ENCODE measurements at regions of chr14 and their contacts with region 1.

Region 1: DNA sequence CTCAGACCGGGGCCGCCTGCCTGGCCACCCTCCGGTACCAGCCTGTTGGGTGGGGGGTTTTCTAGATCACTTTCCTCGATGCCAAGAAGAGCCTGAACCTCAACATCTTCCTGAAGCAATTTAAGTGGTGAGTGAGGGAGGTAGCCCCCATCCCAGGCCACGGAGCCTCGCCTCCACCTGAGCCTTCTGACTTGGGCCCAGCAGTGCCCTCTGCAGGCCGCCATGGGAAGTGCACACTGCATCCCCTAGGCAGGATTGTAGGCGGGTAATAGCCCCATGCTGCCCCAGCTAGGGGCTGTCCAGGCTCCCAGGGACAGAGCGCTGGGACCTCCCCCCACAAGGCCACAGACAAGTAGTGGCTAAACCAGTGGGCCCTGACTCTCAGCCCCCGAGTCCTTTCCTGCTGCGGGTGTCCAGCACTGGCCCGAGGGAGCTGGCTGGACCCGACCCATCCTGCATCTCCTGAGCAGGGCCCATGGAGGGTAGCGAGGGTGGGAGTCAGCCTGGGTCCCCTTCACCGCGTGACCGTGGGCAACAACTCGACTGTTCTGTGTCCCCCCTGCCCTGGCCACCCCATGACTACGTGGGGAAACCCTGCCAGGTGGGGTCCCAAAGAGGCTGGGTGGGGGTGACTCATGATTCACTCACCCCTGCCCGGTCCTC is 15.3 kb upstream of the ADSS1 start:
- DNase-seq: peak; percentile 80
- H3K4me3 Mint-ChIP-seq: no peak overlapping the region
- H3K27ac Mint-ChIP-seq: no peak overlapping the region
- H3K4me1 Mint-ChIP-seq: peaks cover 1% of the 10 kb centered on the region
- H3K27me3 Mint-ChIP-seq: no peaks in the 10 kb centered on the region

Region 2: DNA sequence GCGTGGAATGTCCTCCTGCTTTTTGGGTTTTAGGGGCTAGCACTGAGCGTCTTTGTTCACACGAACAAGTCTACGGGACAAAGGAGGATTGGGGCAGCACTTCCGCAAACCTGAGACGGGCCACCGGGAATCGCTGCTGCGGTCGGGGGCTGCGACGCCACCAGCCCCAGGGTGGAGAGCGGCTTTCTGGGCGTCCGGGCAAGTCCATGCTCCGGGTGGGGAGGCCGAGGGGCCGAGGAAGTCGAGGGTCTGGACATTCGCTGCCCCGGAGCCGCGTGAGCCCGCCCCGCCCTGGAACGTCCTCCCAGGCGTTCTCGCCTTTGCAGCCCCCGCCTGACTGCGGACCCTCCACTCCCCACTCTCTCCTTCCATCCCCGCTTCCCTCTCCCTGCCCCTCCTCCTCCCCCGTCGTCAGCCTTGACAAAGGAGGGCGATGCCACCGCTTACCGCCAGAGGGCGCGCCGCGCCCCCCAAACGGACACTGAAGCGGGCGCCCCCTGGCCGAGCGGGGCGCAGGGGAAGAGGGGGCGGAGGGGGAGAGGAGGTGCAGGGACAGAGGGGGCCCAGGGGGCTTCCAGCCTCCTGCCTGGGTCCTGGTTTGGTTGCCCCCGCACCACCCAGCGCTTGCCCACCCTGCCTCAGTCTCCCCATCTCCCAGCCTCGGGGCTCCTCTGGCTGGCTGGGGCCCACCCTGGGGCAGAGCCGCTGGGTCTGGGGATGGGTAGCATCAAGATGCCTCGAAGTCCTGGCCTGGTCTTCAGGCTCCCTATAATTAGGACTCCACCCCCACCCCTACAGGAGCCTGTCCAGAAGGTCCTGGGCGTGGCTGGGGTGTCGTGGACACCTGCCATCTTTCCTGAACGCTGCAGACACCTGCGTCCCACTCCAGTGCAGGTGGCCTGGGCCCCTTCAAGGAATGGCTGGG is 58.4 kb before region 1 on chr14:
- CTCF ChIA-PET with region 1: interaction called, 6 read pairs
- POLR2A ChIA-PET with region 1: no interaction called
- intact Hi-C with region 1: loop called (anchors 1 kb)
- DNase-seq: peak; percentile 73
- H3K4me3 Mint-ChIP-seq: no peak overlapping the region
- H3K27ac Mint-ChIP-seq: no peak overlapping the region
- H3K4me1 Mint-ChIP-seq: no peaks in the 10 kb centered on the region
- H3K27me3 Mint-ChIP-seq: peaks cover 2% of the 10 kb centered on the region

Region 3: DNA sequence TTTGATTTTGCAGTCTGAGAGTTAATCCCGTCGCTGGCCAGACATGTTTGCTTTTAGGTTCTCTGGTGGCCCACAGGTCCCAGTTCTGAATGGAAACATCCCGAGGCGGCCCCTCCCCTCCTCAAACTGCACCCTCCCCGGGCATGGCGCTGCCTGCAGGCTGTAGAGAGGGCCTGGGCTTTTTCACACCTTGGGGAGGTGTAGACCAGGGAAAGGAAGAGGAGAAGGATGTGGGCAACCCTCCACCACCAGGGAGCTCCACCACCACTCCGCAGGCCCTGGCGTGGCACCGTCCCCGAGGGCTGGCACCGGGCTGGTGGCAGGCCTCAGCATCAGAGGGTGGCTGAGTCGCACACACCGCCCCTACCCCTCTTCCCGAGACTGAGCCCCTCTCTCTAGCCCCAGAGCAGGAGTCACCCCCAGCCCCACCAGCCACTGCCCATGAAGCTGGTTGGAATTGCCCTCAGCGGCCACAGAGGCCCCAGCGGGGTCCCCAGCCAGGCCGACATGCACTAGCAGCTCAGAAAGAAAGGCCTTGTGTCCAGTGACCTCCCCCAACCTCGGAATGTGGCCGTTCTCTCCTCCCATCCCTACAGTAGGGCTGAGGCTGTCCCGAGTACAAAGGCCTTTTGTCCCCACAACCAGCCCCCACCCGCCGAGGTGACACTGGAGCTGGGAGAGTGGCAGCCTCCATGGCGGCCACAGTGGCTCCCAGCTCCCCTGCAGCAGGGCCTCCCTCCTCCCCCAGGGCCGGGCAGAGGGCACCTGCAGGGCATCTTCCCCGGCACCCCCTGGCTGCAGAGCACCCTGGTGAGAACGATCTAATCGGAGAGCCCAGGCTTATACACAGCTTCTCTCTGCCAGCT is 42.8 kb before region 1 on chr14:
- CTCF ChIA-PET with region 1: interaction called, 15 read pairs
- POLR2A ChIA-PET with region 1: no interaction called
- intact Hi-C with region 1: loop called (anchors 1 kb)
- DNase-seq: peak; percentile 67
- H3K4me3 Mint-ChIP-seq: no peak overlapping the region
- H3K27ac Mint-ChIP-seq: no peak overlapping the region
- H3K4me1 Mint-ChIP-seq: peaks cover 22% of the 10 kb centered on the region
- H3K27me3 Mint-ChIP-seq: peaks cover 10% of the 10 kb centered on the region

Region 4: GRCh38 chr14:104694991-104695659 is 13.6 kb before region 1 on chr14:
- CTCF ChIA-PET with region 1: interaction called, 10 read pairs
- POLR2A ChIA-PET with region 1: no interaction called
- intact Hi-C with region 1: no loop called
- DNase-seq: peak; percentile 73
- H3K4me3 Mint-ChIP-seq: peak overlapping the region; percentile 49
- H3K27ac Mint-ChIP-seq: peak overlapping the region; percentile 80
- H3K4me1 Mint-ChIP-seq: peaks cover 41% of the 10 kb centered on the region
- H3K27me3 Mint-ChIP-seq: no peaks in the 10 kb centered on the region

Region 5: DNA sequence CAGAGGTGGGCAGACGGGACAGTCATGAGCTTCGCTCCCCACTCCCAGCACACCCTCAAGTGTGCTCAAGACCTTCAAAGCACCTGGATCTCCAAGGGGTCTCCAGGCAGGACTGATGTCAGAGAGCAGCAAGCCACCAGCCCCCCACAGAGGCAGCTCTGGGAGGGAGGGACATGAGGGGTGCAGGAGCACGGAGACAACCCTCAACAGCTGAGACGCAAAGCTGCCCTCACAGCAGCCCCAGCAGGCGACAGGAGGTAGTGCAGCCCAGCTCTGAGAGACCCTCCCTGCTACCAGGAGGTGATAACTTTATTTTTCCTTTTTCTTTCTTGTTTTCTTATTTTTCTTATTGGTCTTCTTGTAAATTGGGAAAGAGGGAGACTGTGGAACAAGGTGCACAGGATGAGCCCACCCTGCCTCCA is 62.1 kb after region 1 on chr14:
- CTCF ChIA-PET with region 1: no interaction called
- POLR2A ChIA-PET with region 1: no interaction called
- intact Hi-C with region 1: no loop called
- DNase-seq: peak; percentile 35
- H3K4me3 Mint-ChIP-seq: no peak overlapping the region
- H3K27ac Mint-ChIP-seq: peak overlapping the region; percentile 13
- H3K4me1 Mint-ChIP-seq: no peaks in the 10 kb centered on the region
- H3K27me3 Mint-ChIP-seq: no peaks in the 10 kb centered on the region